Breast epithelium (tissue), 4 donors: ENCODE measurements at regions of chr2 and their contacts with region 1.

Region 1: GRCh38 chr2:129864720-129865119 is 114.7 kb upstream of the RAB6C start:
- DNase-seq: no peak
- H3K4me3 ChIP-seq: no peak overlapping the region
- H3K27ac ChIP-seq: peak overlapping the region in 1 of 2 donors; percentile 46
- H3K4me1 ChIP-seq: no peaks in the 10 kb centered on the region
- H3K27me3 ChIP-seq: no peaks in the 10 kb centered on the region
- CTCF ChIP-seq: no peak
- POLR2A ChIP-seq: no peak

Region 2: GRCh38 chr2:128686497-128686859 is 1178.2 kb before region 1 on chr2:
- intact Hi-C with region 1: no loop called
- DNase-seq: no peak
- H3K4me3 ChIP-seq: no peak overlapping the region
- H3K27ac ChIP-seq: no peak overlapping the region
- H3K4me1 ChIP-seq: no peaks in the 10 kb centered on the region
- H3K27me3 ChIP-seq: no peaks in the 10 kb centered on the region
- CTCF ChIP-seq: no peak
- POLR2A ChIP-seq: no peak

Region 3: DNA sequence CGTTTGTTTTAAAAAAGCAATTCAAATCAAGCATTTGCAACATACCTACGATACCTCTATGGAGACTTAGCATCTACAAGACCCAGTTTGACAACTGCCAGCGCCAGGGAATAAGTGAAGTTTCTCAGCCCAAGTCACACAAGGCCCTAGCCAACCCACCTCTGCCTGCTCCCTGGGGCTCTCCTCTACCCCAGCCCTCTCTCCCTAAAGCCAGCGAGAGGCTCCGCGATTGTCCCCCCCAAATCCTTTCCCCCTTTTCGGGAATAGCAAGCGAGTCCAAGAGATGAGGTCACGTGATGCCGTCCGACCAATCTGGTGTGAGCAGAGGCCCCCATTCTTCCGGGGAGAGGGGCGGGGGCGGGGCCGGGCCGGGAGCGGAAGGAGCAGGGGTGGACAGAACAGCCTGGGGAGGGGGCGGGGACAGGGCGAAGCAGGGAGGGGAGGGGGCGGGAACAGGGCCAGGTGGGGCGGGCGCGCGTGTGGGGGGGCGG is 12.6 kb after region 1 on chr2:
- intact Hi-C with region 1: no loop called
- DNase-seq: peak; percentile 93
- H3K4me3 ChIP-seq: peak overlapping the region; percentile 55 to 94 (median 61)
- H3K27ac ChIP-seq: peak overlapping the region; percentile 63 to 93
- H3K4me1 ChIP-seq: peaks cover 0 to 4% of the 10 kb centered on the region in 2 donors
- H3K27me3 ChIP-seq: no peaks in the 10 kb centered on the region
- CTCF ChIP-seq: no peak
- POLR2A ChIP-seq: no peak

Region 4: DNA sequence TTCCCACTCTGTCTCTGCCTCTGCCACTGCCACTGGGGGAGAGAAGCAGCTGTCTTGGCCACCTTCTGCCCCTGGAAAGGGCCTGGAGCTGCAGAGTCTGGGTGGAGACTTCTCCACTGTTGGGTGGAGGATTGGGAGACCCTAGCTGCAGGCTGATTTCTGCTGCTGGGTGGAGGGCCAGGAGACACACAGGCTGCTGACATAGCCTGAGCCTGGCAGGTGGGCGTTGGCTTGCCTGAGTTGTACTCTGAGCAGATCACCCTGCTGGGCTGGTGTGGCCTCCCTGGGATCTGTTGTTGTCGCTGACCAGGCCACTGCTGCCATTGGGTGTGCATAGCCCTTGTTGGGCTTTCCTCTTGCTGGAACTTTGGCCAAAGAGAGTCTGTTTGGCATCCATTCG is 1036.3 kb after region 1 on chr2:
- intact Hi-C with region 1: loop called (anchors 5 kb)
- DNase-seq: no peak
- H3K4me3 ChIP-seq: no peak overlapping the region
- H3K27ac ChIP-seq: no peak overlapping the region
- H3K4me1 ChIP-seq: no peaks in the 10 kb centered on the region
- H3K27me3 ChIP-seq: no peaks in the 10 kb centered on the region
- CTCF ChIP-seq: no peak
- POLR2A ChIP-seq: no peak